CD4-positive, alpha-beta T cell (primary cell): ENCODE measurements at regions of chr1 and their contacts with region 1.

Region 1: DNA sequence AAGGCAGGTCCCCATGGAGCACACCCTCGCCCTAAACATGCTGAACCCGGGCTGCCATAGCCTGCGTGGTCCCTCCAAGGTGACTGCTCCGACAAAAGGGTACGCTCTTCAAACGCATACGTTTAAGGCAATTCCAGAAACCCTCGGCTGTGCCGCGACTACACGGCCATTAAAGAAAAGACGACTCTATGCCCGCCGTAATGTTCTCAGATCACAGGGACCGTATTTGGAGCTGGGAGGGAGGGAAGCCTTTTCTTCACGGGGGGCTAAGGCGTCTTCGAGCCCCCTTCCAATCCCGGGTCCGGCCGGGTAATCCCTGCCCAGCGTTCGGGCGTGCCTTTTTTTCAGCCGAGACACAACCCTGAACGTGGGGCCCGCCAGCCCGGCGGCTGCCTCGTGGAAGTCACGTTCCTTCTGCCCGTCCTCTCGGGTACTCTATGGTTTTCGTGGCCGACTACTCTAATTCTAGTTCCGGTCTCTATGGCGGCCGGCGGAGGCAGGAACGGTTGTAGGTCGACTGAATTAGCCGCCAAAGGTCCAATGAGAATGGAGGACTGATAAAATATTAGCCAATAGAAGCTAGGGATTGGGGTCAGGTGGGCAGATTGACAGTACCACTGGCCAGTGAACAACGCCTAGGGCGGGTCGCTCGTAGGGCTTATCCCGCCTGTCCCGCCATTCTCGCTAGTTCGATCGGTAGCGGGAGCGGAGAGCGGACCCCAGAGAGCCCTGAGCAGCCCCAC is at the start of gene YBX1:
- DNase-seq: peak; percentile 89 to 99 (median 93)
- ATAC-seq: peak; percentile 90
- H3K4me3 ChIP-seq: peak within 1 kb of the TSS; percentile 80
- H3K4me3 Mint-ChIP-seq: peak within 1 kb of the TSS; percentile 100
- H3K27ac ChIP-seq: peak within 1 kb of the TSS; percentile 83 to 87
- H3K27ac Mint-ChIP-seq: peak within 1 kb of the TSS; percentile 94
- H3K4me1 ChIP-seq: peaks cover 36% of the 10 kb centered on the region
- H3K4me1 Mint-ChIP-seq: peaks cover 50% of the 10 kb centered on the region
- H3K27me3 ChIP-seq: no peaks in the 10 kb centered on the region
- H3K27me3 Mint-ChIP-seq: no peaks in the 10 kb centered on the region
- CTCF ChIP-seq: no peak
- total RNA-seq, gene YBX1: 372 to 389 TPM

Region 2: GRCh38 chr1:42335050-42335808 is 346.7 kb before region 1 on chr1 and contains the start of gene FOXJ3:
- CTCF ChIA-PET with region 1: no interaction called
- POLR2A ChIA-PET with region 1: interaction called, 3 read pairs
- intact Hi-C with region 1: loop called (anchors 5 kb)
- DNase-seq: peak; percentile 87 to 99 (median 92)
- ATAC-seq: peak; percentile 93
- H3K4me3 ChIP-seq: peak within 1 kb of the TSS; percentile 88
- H3K4me3 Mint-ChIP-seq: peak within 1 kb of the TSS; percentile 97
- H3K27ac ChIP-seq: peak within 1 kb of the TSS; percentile 84 to 86
- H3K27ac Mint-ChIP-seq: peak within 1 kb of the TSS; percentile 86
- H3K4me1 ChIP-seq: peaks cover 17% of the 10 kb centered on the region
- H3K4me1 Mint-ChIP-seq: peaks cover 55% of the 10 kb centered on the region
- H3K27me3 ChIP-seq: no peaks in the 10 kb centered on the region
- H3K27me3 Mint-ChIP-seq: no peaks in the 10 kb centered on the region
- CTCF ChIP-seq: no peak
- total RNA-seq, gene FOXJ3: 73.1 to 74.9 TPM

Region 3: DNA sequence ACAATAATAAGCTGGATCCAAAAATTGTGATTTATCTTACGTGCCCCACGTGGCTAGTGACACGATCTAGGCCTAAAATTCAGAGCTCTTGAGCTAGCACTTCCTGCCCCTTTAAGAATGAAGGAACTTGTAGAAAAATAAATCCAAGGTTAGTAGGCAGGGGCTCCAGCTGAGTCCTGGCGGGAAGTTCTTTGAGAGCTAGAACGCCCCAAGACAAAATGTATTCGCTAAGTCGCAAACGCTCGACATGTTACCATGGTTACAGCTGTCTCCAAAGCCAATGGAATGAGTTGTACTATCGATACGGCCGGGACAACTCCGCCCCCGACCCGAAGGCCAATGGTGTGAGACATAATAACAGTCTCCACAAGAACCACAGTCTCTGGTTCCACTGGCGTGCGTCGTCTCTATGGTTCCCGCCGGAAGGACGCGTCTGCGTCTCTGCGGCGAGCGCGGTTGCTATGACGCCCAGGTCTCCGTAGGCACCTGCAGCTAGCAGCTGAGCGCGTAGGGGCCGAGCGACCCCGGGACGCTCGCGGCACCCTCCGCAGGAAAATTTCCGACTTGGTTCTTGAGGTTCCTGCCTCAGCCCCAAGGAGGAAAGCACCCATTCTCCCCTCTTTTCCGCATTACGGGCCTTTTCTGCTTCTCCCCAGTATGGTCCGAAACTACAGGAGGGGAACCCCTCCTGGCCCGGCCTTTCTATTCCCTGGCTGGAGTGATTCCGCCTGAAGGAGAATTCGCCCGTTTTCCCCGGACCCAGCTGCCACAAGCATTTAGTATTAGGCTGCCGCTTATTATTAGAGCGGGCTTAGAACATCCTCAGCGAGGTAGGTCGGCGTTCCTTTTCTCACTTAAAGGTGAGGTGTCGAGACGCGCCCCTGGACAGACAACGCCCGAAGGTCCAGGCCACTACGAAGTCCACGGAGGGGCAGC is 218.8 kb before region 1 on chr1 and contains the start of gene CCDC30:
- CTCF ChIA-PET with region 1: no interaction called
- POLR2A ChIA-PET with region 1: interaction called, 19 read pairs
- intact Hi-C with region 1: loop called in 1 of 2 experiments (anchors 5 kb)
- DNase-seq: peak; percentile 91 to 99 (median 95)
- ATAC-seq: peak; percentile 97
- H3K4me3 ChIP-seq: peak within 1 kb of the TSS; percentile 69
- H3K4me3 Mint-ChIP-seq: peak within 1 kb of the TSS; percentile 87
- H3K27ac ChIP-seq: peak within 1 kb of the TSS; percentile 49 to 86
- H3K27ac Mint-ChIP-seq: peak within 1 kb of the TSS; percentile 86
- H3K4me1 ChIP-seq: peaks cover 15% of the 10 kb centered on the region
- H3K4me1 Mint-ChIP-seq: peaks cover 52% of the 10 kb centered on the region
- H3K27me3 ChIP-seq: no peaks in the 10 kb centered on the region
- H3K27me3 Mint-ChIP-seq: peaks cover 4% of the 10 kb centered on the region
- CTCF ChIP-seq: no peak
- total RNA-seq, gene CCDC30: 1.2 to 1.3 TPM

Region 4: GRCh38 chr1:42669936-42670335 is 12.0 kb before region 1 on chr1:
- CTCF ChIA-PET with region 1: interaction called, 3 read pairs
- POLR2A ChIA-PET with region 1: interaction called, 13 read pairs
- intact Hi-C with region 1: no loop called
- DNase-seq: no peak
- ATAC-seq: no peak
- H3K4me3 ChIP-seq: no peak overlapping the region
- H3K4me3 Mint-ChIP-seq: no peak overlapping the region
- H3K27ac ChIP-seq: no peak overlapping the region
- H3K27ac Mint-ChIP-seq: no peak overlapping the region
- H3K4me1 ChIP-seq: no peaks in the 10 kb centered on the region
- H3K4me1 Mint-ChIP-seq: peaks cover 4% of the 10 kb centered on the region
- H3K27me3 ChIP-seq: no peaks in the 10 kb centered on the region
- H3K27me3 Mint-ChIP-seq: no peaks in the 10 kb centered on the region
- CTCF ChIP-seq: no peak

Region 5: DNA sequence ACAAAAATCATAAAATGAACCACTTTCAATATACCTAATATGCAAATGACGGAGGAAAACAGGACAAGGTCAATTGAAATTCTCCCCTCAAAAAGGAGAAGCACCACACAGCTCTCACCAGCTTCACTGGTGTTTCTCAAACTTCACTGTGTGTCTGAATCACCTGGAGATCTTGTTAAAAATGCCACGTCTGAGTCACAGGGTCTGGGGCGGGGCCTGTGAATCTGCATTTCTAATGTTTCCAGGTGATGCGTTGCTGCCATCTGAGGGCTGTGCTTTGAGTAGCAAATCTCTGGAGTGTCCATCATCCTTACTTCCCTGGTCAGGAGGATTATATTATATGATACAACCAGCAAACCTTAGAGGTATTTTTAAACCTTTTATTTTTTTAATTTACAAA is 49.1 kb after region 1 on chr1:
- CTCF ChIA-PET with region 1: no interaction called
- POLR2A ChIA-PET with region 1: no interaction called
- intact Hi-C with region 1: no loop called
- DNase-seq: peak in 4 of 14 experiments; percentile 9 to 45 (median 24)
- ATAC-seq: no peak
- H3K4me3 ChIP-seq: no peak overlapping the region
- H3K4me3 Mint-ChIP-seq: no peak overlapping the region
- H3K27ac ChIP-seq: no peak overlapping the region
- H3K27ac Mint-ChIP-seq: no peak overlapping the region
- H3K4me1 ChIP-seq: no peaks in the 10 kb centered on the region
- H3K4me1 Mint-ChIP-seq: no peaks in the 10 kb centered on the region
- H3K27me3 ChIP-seq: no peaks in the 10 kb centered on the region
- H3K27me3 Mint-ChIP-seq: no peaks in the 10 kb centered on the region
- CTCF ChIP-seq: no peak

Region 6: DNA sequence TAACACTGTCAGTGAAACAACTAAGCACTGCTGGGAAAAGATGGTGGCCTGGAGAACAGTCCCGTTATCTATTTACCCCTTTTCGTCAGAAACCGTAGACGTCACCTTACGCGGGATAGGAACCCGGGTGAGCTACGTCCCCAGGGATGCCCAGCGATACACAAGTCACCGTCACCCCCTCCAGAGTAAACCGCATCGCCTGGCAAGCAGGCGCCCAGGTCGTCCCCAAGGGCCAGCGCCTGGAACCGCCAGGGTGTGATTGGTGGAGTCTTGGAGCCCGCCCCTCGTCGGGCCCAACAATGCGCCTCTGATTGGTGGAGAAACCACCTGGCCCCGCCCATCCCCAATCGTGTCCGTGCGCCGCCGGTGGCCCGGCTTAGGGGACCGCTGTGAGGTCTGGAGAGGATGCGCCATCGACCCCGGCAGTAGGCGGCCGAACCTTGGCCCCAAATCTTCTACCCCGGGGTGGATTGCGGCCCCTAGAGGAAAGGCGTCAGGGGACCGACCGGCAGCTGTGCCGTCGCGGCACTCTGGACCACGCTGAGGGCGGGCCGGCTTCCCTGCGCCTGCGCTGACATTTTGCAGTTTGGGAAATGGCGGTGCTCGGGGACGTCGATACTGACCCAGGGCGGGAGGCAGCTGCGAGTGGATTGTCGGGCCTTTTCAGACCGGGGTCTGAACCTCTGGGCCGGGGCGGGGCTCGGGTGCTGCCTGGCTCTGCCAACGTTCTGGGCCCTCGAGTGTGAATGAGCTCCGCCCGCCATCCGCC is 242.4 kb after region 1 on chr1:
- CTCF ChIA-PET with region 1: no interaction called
- POLR2A ChIA-PET with region 1: interaction called, 7 read pairs
- intact Hi-C with region 1: loop called in 1 of 2 experiments (anchors 5 kb)
- DNase-seq: peak; percentile 81 to 94 (median 88)
- ATAC-seq: peak; percentile 89
- H3K4me3 ChIP-seq: peak overlapping the region; percentile 81
- H3K4me3 Mint-ChIP-seq: peak overlapping the region; percentile 94
- H3K27ac ChIP-seq: peak overlapping the region; percentile 66 to 86
- H3K27ac Mint-ChIP-seq: peak overlapping the region; percentile 84
- H3K4me1 ChIP-seq: peaks cover 22% of the 10 kb centered on the region
- H3K4me1 Mint-ChIP-seq: peaks cover 40% of the 10 kb centered on the region
- H3K27me3 ChIP-seq: no peaks in the 10 kb centered on the region
- H3K27me3 Mint-ChIP-seq: no peaks in the 10 kb centered on the region
- CTCF ChIP-seq: no peak